ENCODE measurements at regions of chr2 and their contacts with region 1.

Region 1: GRCh38 chr2:190679813-190680591 is 31.1 kb downstream of the NAB1 start:
- DNase-seq: peak; percentile 23 to 79 (median 59)
- ATAC-seq: peak; percentile 82
- H3K4me3 ChIP-seq: no peak overlapping the region
- H3K4me3 Mint-ChIP-seq: no peak overlapping the region
- H3K27ac ChIP-seq: no peak overlapping the region
- H3K27ac Mint-ChIP-seq: peak overlapping the region; percentile 39
- H3K4me1 ChIP-seq: peaks cover 9% of the 10 kb centered on the region
- H3K4me1 Mint-ChIP-seq: peaks cover 40% of the 10 kb centered on the region
- H3K27me3 ChIP-seq: no peaks in the 10 kb centered on the region
- H3K27me3 Mint-ChIP-seq: no peaks in the 10 kb centered on the region
- CTCF ChIP-seq: peak; percentile 80

Region 2: DNA sequence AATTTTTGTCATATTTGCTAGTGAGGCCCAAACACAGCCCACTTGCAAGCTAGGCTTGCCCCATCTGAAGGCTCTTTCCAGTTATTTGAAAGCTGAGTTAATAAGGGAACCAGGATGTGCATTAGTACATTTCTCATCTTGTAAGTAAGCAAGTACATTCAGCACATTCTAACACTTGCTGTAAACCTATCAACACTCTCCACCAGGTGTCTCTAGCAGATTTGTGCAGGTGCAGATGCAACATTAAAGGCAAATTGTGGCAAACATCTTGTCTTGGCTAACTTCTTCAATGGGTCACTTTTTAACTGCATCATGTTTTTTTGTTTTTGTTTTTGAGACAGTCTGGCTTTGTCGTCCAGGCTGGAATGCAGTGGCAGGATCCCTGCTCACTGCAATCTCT is 297.2 kb before region 1 on chr2:
- CTCF ChIA-PET with region 1: interaction called, 57 read pairs
- POLR2A ChIA-PET with region 1: interaction called, 3 read pairs
- intact Hi-C with region 1: loop called (anchors 1 to 2 kb)
- DNase-seq: peak in 6 of 9 experiments; percentile 15 to 82 (median 30)
- ATAC-seq: peak; percentile 87
- H3K4me3 ChIP-seq: no peak overlapping the region
- H3K4me3 Mint-ChIP-seq: no peak overlapping the region
- H3K27ac ChIP-seq: no peak overlapping the region
- H3K27ac Mint-ChIP-seq: no peak overlapping the region
- H3K4me1 ChIP-seq: no peaks in the 10 kb centered on the region
- H3K4me1 Mint-ChIP-seq: no peaks in the 10 kb centered on the region
- H3K27me3 ChIP-seq: no peaks in the 10 kb centered on the region
- H3K27me3 Mint-ChIP-seq: no peaks in the 10 kb centered on the region
- CTCF ChIP-seq: peak; percentile 66

Region 3: GRCh38 chr2:190511104-190511503 is 168.9 kb before region 1 on chr2:
- CTCF ChIA-PET with region 1: interaction called, 12 read pairs
- POLR2A ChIA-PET with region 1: no interaction called
- intact Hi-C with region 1: no loop called
- DNase-seq: no peak
- ATAC-seq: no peak
- H3K4me3 ChIP-seq: no peak overlapping the region
- H3K4me3 Mint-ChIP-seq: no peak overlapping the region
- H3K27ac ChIP-seq: no peak overlapping the region
- H3K27ac Mint-ChIP-seq: peak overlapping the region; percentile 62
- H3K4me1 ChIP-seq: peaks cover 9% of the 10 kb centered on the region
- H3K4me1 Mint-ChIP-seq: peaks cover 21% of the 10 kb centered on the region
- H3K27me3 ChIP-seq: no peaks in the 10 kb centered on the region
- H3K27me3 Mint-ChIP-seq: no peaks in the 10 kb centered on the region
- CTCF ChIP-seq: no peak

Region 4: DNA sequence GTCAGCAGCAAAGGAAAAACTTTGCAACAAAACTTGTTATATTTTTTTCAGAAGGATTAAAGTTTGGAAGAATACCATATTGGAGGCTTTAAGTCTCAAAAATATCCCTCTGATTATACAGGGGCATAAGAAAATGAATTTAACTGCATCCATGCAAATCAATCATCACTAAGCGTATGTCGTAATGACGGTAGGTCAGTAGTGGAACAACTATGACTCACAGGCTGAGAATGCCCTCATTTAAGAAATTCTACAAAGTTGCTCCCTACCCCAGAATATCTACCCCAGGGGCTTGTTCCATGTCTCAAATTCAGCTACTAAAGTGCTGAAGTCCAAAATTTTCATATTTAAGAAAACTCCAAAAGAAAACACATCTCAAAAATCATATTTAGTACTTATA is 43.6 kb before region 1 on chr2:
- CTCF ChIA-PET with region 1: interaction called, 10 read pairs
- POLR2A ChIA-PET with region 1: no interaction called
- intact Hi-C with region 1: no loop called
- DNase-seq: no peak
- ATAC-seq: no peak
- H3K4me3 ChIP-seq: no peak overlapping the region
- H3K4me3 Mint-ChIP-seq: no peak overlapping the region
- H3K27ac ChIP-seq: no peak overlapping the region
- H3K27ac Mint-ChIP-seq: no peak overlapping the region
- H3K4me1 ChIP-seq: no peaks in the 10 kb centered on the region
- H3K4me1 Mint-ChIP-seq: no peaks in the 10 kb centered on the region
- H3K27me3 ChIP-seq: no peaks in the 10 kb centered on the region
- H3K27me3 Mint-ChIP-seq: no peaks in the 10 kb centered on the region
- CTCF ChIP-seq: no peak

Region 5: DNA sequence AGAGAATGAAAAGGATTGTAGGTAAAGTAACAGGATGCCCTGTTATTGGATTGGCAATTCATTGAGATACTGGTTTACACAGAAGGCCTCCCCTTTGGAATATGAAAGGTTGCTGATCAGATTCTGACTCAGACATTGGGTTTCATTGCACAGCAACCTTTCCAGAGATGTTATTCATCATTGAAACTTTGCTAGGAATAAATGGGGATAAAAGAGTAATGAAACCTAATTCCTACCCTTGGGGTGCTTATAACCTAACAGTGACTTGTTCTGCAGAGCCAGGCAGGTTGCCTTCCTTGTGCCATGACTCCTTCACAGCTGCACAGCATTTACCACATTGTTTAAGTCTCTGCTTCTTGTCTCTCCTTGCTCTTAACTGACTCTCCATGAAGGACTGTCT is 26.1 kb before region 1 on chr2:
- CTCF ChIA-PET with region 1: interaction called, 8 read pairs
- POLR2A ChIA-PET with region 1: interaction called, 3 read pairs
- intact Hi-C with region 1: loop called in 1 of 2 experiments (anchors 1 kb)
- DNase-seq: no peak
- ATAC-seq: no peak
- H3K4me3 ChIP-seq: no peak overlapping the region
- H3K4me3 Mint-ChIP-seq: no peak overlapping the region
- H3K27ac ChIP-seq: no peak overlapping the region
- H3K27ac Mint-ChIP-seq: no peak overlapping the region
- H3K4me1 ChIP-seq: peaks cover 24% of the 10 kb centered on the region
- H3K4me1 Mint-ChIP-seq: peaks cover 56% of the 10 kb centered on the region
- H3K27me3 ChIP-seq: no peaks in the 10 kb centered on the region
- H3K27me3 Mint-ChIP-seq: no peaks in the 10 kb centered on the region
- CTCF ChIP-seq: no peak

Region 6: DNA sequence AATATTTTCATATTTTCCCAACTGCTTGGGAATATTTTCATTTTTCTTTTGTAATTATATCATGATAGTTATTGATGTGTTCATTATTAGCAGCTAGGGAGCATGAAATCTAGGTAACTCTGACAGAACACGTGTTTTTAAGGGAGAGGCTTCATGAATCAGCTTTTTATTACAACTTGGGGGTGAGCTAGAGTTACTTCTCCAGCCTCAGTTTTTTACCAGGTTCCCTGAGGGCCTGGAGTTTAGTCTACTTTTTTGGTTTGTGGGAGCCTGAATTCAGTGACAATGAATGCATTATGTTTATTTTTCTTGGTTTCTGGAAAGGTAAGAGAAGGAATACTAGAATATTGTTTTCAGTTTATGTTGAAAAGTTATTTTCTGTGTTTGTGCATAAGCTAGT is 13.1 kb before region 1 on chr2:
- CTCF ChIA-PET with region 1: interaction called, 10 read pairs
- POLR2A ChIA-PET with region 1: interaction called, 4 read pairs
- intact Hi-C with region 1: no loop called
- DNase-seq: no peak
- ATAC-seq: no peak
- H3K4me3 ChIP-seq: no peak overlapping the region
- H3K4me3 Mint-ChIP-seq: no peak overlapping the region
- H3K27ac ChIP-seq: no peak overlapping the region
- H3K27ac Mint-ChIP-seq: no peak overlapping the region
- H3K4me1 ChIP-seq: no peaks in the 10 kb centered on the region
- H3K4me1 Mint-ChIP-seq: peaks cover 32% of the 10 kb centered on the region
- H3K27me3 ChIP-seq: no peaks in the 10 kb centered on the region
- H3K27me3 Mint-ChIP-seq: no peaks in the 10 kb centered on the region
- CTCF ChIP-seq: no peak

Region 7: DNA sequence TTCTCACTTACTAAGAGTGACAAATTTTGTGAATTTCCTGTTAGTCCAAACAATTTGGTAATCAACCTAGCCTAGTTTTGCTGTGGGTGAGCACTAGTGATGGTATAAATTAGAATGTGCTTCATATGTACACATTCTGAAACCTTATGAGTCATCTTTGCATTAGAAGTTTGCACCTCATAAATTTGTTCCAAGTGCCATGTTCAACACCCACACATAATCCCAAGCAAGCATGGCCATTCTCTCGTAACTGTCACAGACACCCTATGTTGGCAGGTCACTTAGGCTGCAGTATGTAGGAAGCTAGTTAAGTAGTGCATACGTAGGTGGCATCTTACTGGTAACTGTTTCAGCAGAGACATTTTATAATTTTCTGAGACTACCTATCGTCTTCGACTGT is 15.7 kb after region 1 on chr2:
- CTCF ChIA-PET with region 1: interaction called, 8 read pairs
- POLR2A ChIA-PET with region 1: no interaction called
- intact Hi-C with region 1: loop called in 1 of 2 experiments (anchors 2 kb)
- DNase-seq: peak in 3 of 9 experiments; percentile 22 to 71 (median 27)
- ATAC-seq: peak; percentile 74
- H3K4me3 ChIP-seq: no peak overlapping the region
- H3K4me3 Mint-ChIP-seq: no peak overlapping the region
- H3K27ac ChIP-seq: no peak overlapping the region
- H3K27ac Mint-ChIP-seq: no peak overlapping the region
- H3K4me1 ChIP-seq: no peaks in the 10 kb centered on the region
- H3K4me1 Mint-ChIP-seq: peaks cover 9% of the 10 kb centered on the region
- H3K27me3 ChIP-seq: no peaks in the 10 kb centered on the region
- H3K27me3 Mint-ChIP-seq: no peaks in the 10 kb centered on the region
- CTCF ChIP-seq: no peak